PC-3 (cell line): ENCODE measurements at regions of chr2 and their contacts with region 1.

Region 1: DNA sequence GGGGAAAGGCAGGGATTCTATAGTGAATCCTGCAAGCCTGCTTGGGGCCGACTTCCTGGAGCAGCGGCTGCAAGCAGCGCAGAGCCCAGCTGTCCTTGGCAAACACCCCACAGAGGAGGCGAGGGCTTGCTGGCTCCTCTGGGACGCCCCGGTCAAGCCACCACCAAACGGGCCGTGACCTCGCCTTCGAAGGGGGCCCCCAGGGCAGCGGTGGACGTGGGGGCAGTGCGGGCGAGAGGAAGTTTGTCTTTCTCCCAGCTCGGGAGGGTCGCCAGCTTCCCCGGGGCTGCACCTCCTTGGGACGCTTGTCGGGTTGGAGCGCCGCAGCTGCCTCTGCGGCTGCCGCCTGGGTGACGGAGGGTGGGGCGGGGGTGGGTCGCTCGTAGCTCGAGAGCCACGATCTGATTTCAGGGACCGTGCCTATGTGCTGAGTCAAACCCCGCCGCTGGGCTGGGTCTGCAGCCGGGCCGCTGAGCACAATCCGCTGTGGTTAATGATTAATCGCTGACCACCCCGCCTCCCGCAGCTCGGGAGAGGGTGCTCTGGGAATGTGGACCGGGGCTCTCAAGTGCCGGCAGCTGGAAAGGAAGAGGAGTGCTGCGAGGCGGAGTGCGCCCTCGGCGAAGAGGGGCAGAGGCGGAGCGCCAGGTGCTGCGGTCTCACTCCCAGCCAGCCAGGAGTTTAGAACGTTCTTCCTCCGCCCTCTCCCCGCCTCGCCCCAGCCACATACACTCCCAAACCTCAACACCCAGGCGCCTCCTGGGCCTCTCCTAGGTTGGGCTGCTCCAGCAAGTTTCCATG is at the start of gene GPR39:
- DNase-seq: peak; percentile 99
- ATAC-seq: peak; percentile 77
- H3K4me3 ChIP-seq: peak within 1 kb of the TSS; percentile 88
- H3K27ac ChIP-seq: peak within 1 kb of the TSS; percentile 93
- H3K4me1 ChIP-seq: peaks cover 49% of the 10 kb centered on the region
- H3K27me3 ChIP-seq: no peaks in the 10 kb centered on the region
- CTCF ChIP-seq: no peak
- total RNA-seq, gene GPR39: 34.8 and 43.2 TPM in 2 replicates

Region 2: GRCh38 chr2:132267105-132267497 is 149.2 kb before region 1 on chr2:
- CTCF ChIA-PET with region 1: no interaction called
- POLR2A ChIA-PET with region 1: no interaction called
- intact Hi-C with region 1: loop called (anchors 10 kb)
- DNase-seq: no peak
- ATAC-seq: no peak
- H3K4me3 ChIP-seq: no peak overlapping the region
- H3K27ac ChIP-seq: no peak overlapping the region
- H3K4me1 ChIP-seq: peaks cover 8% of the 10 kb centered on the region; the same call in 1 of the 2 replicates
- H3K27me3 ChIP-seq: no peaks in the 10 kb centered on the region
- CTCF ChIP-seq: no peak

Region 3: GRCh38 chr2:132400169-132400900 is 15.9 kb before region 1 on chr2:
- CTCF ChIA-PET with region 1: interaction called, 5 read pairs
- POLR2A ChIA-PET with region 1: interaction called, 3 read pairs
- intact Hi-C with region 1: loop called (anchors 2 kb)
- DNase-seq: peak; percentile 70
- ATAC-seq: peak; percentile 77
- H3K4me3 ChIP-seq: no peak overlapping the region
- H3K27ac ChIP-seq: no peak overlapping the region
- H3K4me1 ChIP-seq: peaks cover 8% of the 10 kb centered on the region
- H3K27me3 ChIP-seq: no peaks in the 10 kb centered on the region
- CTCF ChIP-seq: peak; percentile 43

Region 4: DNA sequence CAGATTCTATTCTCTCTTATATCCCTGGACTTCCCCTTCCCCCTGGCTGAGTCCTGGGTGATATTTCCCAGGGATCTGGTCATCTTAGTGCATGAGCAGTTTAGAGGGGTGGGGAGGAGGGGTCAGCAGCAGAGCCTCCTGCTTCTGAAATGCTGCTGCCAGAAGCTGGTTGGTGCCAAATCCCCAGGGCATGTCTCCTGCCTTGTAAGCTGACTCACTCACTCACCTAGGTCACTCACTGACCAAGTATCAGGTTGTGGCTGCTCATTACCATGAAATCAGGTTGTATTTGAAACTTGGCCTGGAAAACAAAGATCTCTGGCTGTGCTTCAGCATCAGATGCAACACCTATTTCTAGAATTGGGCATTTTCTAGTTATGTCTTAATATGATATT is 14.6 kb after region 1 on chr2:
- CTCF ChIA-PET with region 1: interaction called, 4 read pairs
- POLR2A ChIA-PET with region 1: interaction called, 11 read pairs
- intact Hi-C with region 1: loop called (anchors 1 kb)
- DNase-seq: peak; percentile 92
- ATAC-seq: peak; percentile 84
- H3K4me3 ChIP-seq: peak overlapping the region; percentile 58
- H3K27ac ChIP-seq: peak overlapping the region; percentile 99
- H3K4me1 ChIP-seq: peaks cover 48% of the 10 kb centered on the region
- H3K27me3 ChIP-seq: no peaks in the 10 kb centered on the region
- CTCF ChIP-seq: no peak

Region 5: GRCh38 chr2:132438691-132439090 is 22.4 kb after region 1 on chr2:
- CTCF ChIA-PET with region 1: interaction called, 7 read pairs
- POLR2A ChIA-PET with region 1: interaction called, 17 read pairs
- intact Hi-C with region 1: loop called (anchors 1 kb)
- DNase-seq: peak; percentile 99
- ATAC-seq: peak; percentile 76
- H3K4me3 ChIP-seq: peak overlapping the region; percentile 25; the same call in 1 of the 2 replicates
- H3K27ac ChIP-seq: peak overlapping the region; percentile 98
- H3K4me1 ChIP-seq: peaks cover 52% of the 10 kb centered on the region
- H3K27me3 ChIP-seq: no peaks in the 10 kb centered on the region
- CTCF ChIP-seq: no peak

Region 6: GRCh38 chr2:132448771-132449170 is 32.5 kb after region 1 on chr2:
- CTCF ChIA-PET with region 1: interaction called, 3 read pairs
- POLR2A ChIA-PET with region 1: interaction called, 3 read pairs
- intact Hi-C with region 1: loop called (anchors 1 kb)
- DNase-seq: peak; percentile 66
- ATAC-seq: peak; percentile 72
- H3K4me3 ChIP-seq: no peak overlapping the region
- H3K27ac ChIP-seq: no peak overlapping the region
- H3K4me1 ChIP-seq: peaks cover 8% of the 10 kb centered on the region; the same call in 1 of the 2 replicates
- H3K27me3 ChIP-seq: no peaks in the 10 kb centered on the region
- CTCF ChIP-seq: peak; percentile 89

Region 7: DNA sequence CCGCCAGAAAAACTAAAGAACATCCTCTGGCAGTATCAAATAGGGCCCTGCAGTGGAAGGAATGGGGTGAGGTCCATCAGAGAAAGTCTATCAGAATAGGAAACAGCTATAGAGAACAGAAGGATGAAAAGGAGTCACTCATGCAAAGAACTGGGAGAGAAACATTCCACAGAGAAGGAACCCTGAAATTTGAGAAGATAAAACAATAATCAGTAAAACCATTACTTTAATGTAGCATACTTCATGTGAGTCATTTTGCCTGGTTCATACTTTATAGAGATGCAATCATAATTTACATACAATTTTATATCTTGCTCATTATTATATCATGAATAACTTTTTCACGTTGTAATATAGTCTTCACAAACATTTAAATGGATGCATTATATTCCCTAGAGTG is 749.8 kb after region 1 on chr2:
- CTCF ChIA-PET with region 1: no interaction called
- POLR2A ChIA-PET with region 1: no interaction called
- intact Hi-C with region 1: loop called (anchors 1 kb)
- DNase-seq: peak; percentile 45
- ATAC-seq: peak; percentile 75
- H3K4me3 ChIP-seq: no peak overlapping the region
- H3K27ac ChIP-seq: peak overlapping the region; percentile 63; the same call in 1 of the 2 replicates
- H3K4me1 ChIP-seq: peaks cover 20% of the 10 kb centered on the region
- H3K27me3 ChIP-seq: no peaks in the 10 kb centered on the region
- CTCF ChIP-seq: no peak